ENCODE measurements at regions of chr16 and their contacts with region 1.

Region 1: GRCh38 chr16:30478766-30479478 is 6.4 kb downstream of the ITGAL start:
- DNase-seq: no peak
- ATAC-seq: no peak
- H3K4me3 ChIP-seq: no peak overlapping the region
- H3K4me3 Mint-ChIP-seq: peak overlapping the region; percentile 50
- H3K27ac ChIP-seq: peak overlapping the region in 1 of 2 experiments; percentile 31
- H3K27ac Mint-ChIP-seq: peak overlapping the region; percentile 90
- H3K4me1 ChIP-seq: peaks cover 47% of the 10 kb centered on the region
- H3K4me1 Mint-ChIP-seq: peaks cover 60% of the 10 kb centered on the region
- H3K27me3 ChIP-seq: no peaks in the 10 kb centered on the region
- H3K27me3 Mint-ChIP-seq: no peaks in the 10 kb centered on the region
- CTCF ChIP-seq: no peak

Region 2: DNA sequence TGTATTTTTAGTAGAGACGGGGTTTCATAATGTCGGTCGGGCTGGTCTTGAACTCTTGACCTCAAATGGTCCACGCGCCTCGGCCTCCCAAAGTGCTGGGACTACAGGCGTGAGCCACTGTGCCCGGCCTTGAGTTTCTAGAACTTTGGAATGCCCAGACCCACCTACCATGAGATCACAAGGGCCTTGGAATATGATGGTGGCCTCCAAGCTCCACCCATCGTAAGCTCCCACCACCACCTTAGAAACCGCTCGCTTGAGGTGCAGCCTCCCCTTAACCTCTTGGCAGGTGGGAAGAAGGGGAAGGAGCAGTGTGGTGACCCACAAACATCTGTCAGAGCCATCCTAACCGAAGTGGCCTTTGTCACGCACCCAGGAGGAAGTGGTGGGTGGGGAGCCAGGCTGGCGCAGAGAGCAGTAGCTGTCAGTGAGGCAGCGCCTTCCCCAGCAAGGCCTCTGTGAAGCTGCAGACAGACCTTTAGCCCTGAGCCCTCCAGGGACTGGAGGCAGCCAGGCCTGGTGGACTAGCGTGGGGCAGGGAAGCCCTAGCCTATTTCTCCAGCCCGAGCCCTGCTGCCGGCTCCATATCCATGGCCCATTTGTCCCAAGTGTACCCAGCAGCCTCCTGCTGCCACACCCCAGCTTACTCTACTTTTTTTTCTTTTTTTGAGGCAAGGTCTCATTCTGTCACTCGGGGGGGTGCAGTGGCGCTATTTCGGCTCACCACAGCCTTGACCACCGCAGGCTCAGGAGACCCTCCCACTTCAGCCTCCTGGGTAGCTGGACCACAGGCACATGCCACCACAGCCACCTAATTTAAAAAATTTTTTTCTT is 20.1 kb before region 1 on chr16:
- CTCF ChIA-PET with region 1: interaction called, 36 read pairs
- POLR2A ChIA-PET with region 1: interaction called, 148 read pairs
- intact Hi-C with region 1: no loop called
- DNase-seq: peak; percentile 40 to 93 (median 76)
- ATAC-seq: peak; percentile 93
- H3K4me3 ChIP-seq: peak overlapping the region; percentile 5 to 22
- H3K4me3 Mint-ChIP-seq: peak overlapping the region; percentile 66
- H3K27ac ChIP-seq: peak overlapping the region; percentile 15 to 69
- H3K27ac Mint-ChIP-seq: peak overlapping the region; percentile 89
- H3K4me1 ChIP-seq: peaks cover 26% of the 10 kb centered on the region
- H3K4me1 Mint-ChIP-seq: peaks cover 48% of the 10 kb centered on the region
- H3K27me3 ChIP-seq: no peaks in the 10 kb centered on the region
- H3K27me3 Mint-ChIP-seq: no peaks in the 10 kb centered on the region
- CTCF ChIP-seq: no peak

Region 3: GRCh38 chr16:30519120-30520049 is 40.5 kb after region 1 on chr16:
- CTCF ChIA-PET with region 1: no interaction called
- POLR2A ChIA-PET with region 1: interaction called, 11 read pairs
- intact Hi-C with region 1: no loop called
- DNase-seq: no peak
- ATAC-seq: peak; percentile 69
- H3K4me3 ChIP-seq: no peak overlapping the region
- H3K4me3 Mint-ChIP-seq: no peak overlapping the region
- H3K27ac ChIP-seq: peak overlapping the region in 1 of 2 experiments; percentile 19
- H3K27ac Mint-ChIP-seq: peak overlapping the region; percentile 74
- H3K4me1 ChIP-seq: peaks cover 13% of the 10 kb centered on the region
- H3K4me1 Mint-ChIP-seq: peaks cover 18% of the 10 kb centered on the region
- H3K27me3 ChIP-seq: no peaks in the 10 kb centered on the region
- H3K27me3 Mint-ChIP-seq: no peaks in the 10 kb centered on the region
- CTCF ChIP-seq: no peak

Measured in CD8-positive, alpha-beta T cell (primary cell).